ENCODE measurements at regions of chr13 and their contacts with region 1.

Region 1: GRCh38 chr13:27251166-27252091 is at the start of gene RPL21:
- DNase-seq: peak; percentile 89
- ATAC-seq: peak; percentile 93
- H3K4me3 Mint-ChIP-seq: peak within 1 kb of the TSS; percentile 93
- H3K27ac Mint-ChIP-seq: peak within 1 kb of the TSS; percentile 99
- H3K4me1 Mint-ChIP-seq: peaks cover 48% of the 10 kb centered on the region
- H3K27me3 Mint-ChIP-seq: no peaks in the 10 kb centered on the region
- CTCF ChIP-seq: no peak
- total RNA-seq, gene RPL21: 1,996 and 2,528 TPM in 2 replicates

Region 2: DNA sequence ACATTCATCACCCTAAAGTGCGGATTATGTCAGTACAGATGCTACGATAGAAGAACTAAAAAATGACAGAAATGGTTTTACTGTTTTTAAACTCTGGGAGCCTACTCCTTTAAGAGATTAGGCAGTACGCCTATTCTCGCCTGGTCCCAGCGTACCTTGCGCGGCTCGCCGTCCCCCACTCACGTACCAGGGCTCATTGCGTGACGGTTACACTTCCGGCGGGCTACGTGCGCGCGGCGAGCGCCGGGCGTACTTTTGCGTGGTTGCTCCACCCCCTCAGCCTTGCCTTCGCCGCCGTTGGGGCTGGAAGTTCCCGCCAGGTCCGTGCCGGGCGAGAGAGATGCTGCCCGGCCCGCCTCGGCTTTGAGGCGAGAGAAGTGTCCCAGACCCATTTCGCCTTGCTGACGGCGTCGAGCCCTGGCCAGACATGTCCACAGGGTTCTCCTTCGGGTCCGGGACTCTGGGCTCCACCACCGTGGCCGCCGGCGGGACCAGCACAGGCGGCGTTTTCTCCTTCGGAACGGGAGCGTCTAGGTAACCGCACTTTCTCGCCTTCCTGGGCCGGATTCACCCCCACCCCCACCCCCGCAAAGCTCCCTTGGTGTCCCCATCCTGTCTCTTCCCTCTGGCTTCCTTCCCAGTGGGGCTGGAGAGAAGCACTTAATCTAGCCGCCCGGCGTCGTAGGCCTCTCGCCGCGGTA is 1949.9 kb before region 1 on chr13 and contains the start of gene NUP58:
- CTCF ChIA-PET with region 1: no interaction called
- POLR2A ChIA-PET with region 1: no interaction called
- intact Hi-C with region 1: loop called (anchors 2 kb)
- DNase-seq: peak; percentile 89
- ATAC-seq: peak; percentile 99
- H3K4me3 Mint-ChIP-seq: peak within 1 kb of the TSS; percentile 91
- H3K27ac Mint-ChIP-seq: peak within 1 kb of the TSS; percentile 91
- H3K4me1 Mint-ChIP-seq: peaks cover 32% of the 10 kb centered on the region
- H3K27me3 Mint-ChIP-seq: peaks cover 19% of the 10 kb centered on the region
- CTCF ChIP-seq: no peak
- total RNA-seq, gene NUP58: 44.8 and 48.4 TPM in 2 replicates

Region 3: DNA sequence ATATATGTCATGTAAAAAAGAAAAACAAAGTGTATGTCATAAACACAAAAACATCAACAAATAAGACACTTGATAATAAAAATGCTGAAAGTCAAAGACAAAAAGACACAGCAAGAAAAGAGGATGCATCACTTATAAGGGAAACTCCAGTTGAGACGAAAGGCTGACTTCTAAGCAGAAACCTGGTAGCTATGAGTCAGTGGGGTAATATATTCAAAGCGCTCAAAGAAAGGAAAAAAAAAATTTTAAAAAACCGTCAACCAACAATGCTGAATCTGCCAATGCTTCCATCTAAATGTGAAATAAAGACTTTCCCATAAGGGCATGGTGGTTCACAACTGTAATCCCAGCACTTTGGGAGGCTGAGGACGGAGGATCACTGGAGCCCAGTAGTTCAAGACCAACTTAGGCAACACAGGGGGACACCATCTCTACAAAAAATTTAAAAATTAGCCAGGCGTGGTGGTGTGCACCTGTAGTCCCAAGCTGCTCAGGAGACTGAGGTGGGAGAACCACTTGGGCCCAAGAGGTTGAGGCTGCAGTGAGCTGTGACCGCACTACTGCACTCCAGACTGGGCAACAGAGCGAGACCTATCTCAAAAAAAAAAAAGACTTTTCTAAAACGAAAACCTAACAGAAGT is 103.8 kb before region 1 on chr13:
- CTCF ChIA-PET with region 1: no interaction called
- POLR2A ChIA-PET with region 1: interaction called, 12 read pairs
- intact Hi-C with region 1: loop called (anchors 1 kb)
- DNase-seq: peak; percentile 48
- ATAC-seq: peak; percentile 90
- H3K4me3 Mint-ChIP-seq: peak overlapping the region; percentile 81
- H3K27ac Mint-ChIP-seq: peak overlapping the region; percentile 99
- H3K4me1 Mint-ChIP-seq: peaks cover 92% of the 10 kb centered on the region
- H3K27me3 Mint-ChIP-seq: no peaks in the 10 kb centered on the region
- CTCF ChIP-seq: no peak

Region 4: DNA sequence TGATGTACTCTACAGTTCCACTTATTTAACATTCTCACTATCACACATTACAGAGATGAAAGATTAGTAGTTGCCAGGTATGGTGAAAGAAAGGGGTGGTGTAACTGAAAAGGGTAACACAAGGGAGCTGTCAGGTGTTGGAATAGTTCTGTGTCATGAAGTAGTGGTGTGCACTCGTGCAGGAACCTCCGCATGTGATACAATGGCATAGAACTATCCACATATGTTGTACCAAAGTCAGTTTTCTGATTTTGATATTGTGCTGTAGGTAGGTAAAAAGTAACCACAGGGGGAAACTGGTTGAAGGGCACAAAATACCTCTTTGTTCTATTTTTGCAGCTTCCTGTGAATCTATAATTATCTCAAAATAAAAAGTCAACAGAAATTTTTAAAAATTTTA is 24.4 kb before region 1 on chr13:
- CTCF ChIA-PET with region 1: no interaction called
- POLR2A ChIA-PET with region 1: interaction called, 5 read pairs
- intact Hi-C with region 1: loop called (anchors 2 kb)
- DNase-seq: no peak
- ATAC-seq: peak; percentile 35
- H3K4me3 Mint-ChIP-seq: peak overlapping the region; percentile 36
- H3K27ac Mint-ChIP-seq: peak overlapping the region; percentile 32
- H3K4me1 Mint-ChIP-seq: peaks cover 67% of the 10 kb centered on the region
- H3K27me3 Mint-ChIP-seq: no peaks in the 10 kb centered on the region
- CTCF ChIP-seq: no peak

Region 5: GRCh38 chr13:27302643-27303262 is 51.3 kb after region 1 on chr13:
- CTCF ChIA-PET with region 1: no interaction called
- POLR2A ChIA-PET with region 1: no interaction called
- intact Hi-C with region 1: no loop called
- DNase-seq: no peak
- ATAC-seq: no peak
- H3K4me3 Mint-ChIP-seq: no peak overlapping the region
- H3K27ac Mint-ChIP-seq: no peak overlapping the region
- H3K4me1 Mint-ChIP-seq: peaks cover 16% of the 10 kb centered on the region
- H3K27me3 Mint-ChIP-seq: no peaks in the 10 kb centered on the region
- CTCF ChIP-seq: no peak

Region 6: DNA sequence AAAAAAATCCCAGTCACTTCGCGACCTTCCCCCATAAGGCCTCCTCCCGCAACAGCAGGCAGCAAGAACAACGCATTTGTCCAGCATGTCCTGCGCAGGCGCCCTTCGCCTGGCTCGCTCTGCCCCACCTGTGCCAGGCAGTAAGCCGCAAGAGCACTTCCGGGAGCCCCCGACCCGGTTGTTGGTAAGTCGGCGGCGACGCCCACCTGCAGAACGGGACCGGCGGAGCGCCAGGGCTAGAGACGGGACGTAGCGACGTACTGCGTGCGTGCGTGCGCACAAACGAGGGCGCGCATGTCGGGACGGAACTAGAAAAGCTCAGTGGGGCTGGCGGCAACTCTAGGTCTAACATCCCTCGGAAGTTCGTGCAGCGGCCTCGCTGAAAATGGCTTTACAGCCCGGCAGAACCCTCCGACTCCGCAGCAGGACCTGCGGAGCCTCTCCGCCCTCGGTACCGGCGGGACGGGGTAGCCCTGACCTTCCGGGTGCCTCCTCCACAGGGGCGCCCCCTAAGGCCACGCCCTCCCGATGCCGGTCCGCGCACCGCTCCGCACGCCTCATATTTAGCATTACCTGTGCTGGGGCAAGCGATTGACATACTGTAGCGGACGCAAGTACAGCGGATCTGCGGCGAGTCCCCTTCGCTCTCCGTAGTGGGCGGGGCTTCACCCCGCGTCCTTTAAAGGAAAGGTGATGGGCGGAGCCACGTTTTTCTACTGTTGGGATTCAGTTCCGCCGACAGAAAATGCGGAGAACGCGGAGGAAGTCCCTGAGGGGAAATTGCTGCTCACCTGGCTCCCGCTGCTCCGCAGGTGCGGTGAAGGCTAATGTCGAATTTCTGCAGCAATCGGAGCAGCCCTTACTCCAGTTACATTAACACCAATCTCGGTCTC is 198.8 kb after region 1 on chr13 and contains the start of gene MTIF3:
- CTCF ChIA-PET with region 1: no interaction called
- POLR2A ChIA-PET with region 1: interaction called, 7 read pairs
- intact Hi-C with region 1: loop called (anchors 1 kb)
- DNase-seq: peak; percentile 89
- ATAC-seq: peak; percentile 81
- H3K4me3 Mint-ChIP-seq: peak within 1 kb of the TSS; percentile 96
- H3K27ac Mint-ChIP-seq: peak within 1 kb of the TSS; percentile 98
- H3K4me1 Mint-ChIP-seq: peaks cover 69% of the 10 kb centered on the region
- H3K27me3 Mint-ChIP-seq: no peaks in the 10 kb centered on the region
- CTCF ChIP-seq: no peak
- total RNA-seq, gene MTIF3: 39.8 and 50.1 TPM in 2 replicates

Region 7: DNA sequence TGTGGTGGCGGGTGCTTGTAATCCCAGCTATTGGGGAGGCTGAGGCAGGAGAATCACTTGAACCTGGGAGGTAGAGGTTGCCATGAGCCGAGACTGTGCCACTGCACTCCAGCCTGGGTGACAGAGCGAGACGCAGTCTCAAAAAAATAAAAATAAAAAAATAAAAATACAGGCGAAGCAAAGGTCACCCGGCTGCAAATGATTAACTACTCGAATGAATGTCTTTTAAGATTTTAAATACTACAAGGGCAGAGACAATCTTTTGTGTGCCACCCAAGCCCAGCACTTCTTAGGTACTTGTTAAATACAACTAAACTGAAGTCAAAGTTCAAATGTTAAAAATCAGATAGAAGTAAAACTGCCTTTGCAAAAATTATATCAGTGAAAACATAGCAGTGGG is 362.2 kb after region 1 on chr13:
- CTCF ChIA-PET with region 1: no interaction called
- POLR2A ChIA-PET with region 1: no interaction called
- intact Hi-C with region 1: no loop called
- DNase-seq: no peak
- ATAC-seq: no peak
- H3K4me3 Mint-ChIP-seq: no peak overlapping the region
- H3K27ac Mint-ChIP-seq: no peak overlapping the region
- H3K4me1 Mint-ChIP-seq: peaks cover 41% of the 10 kb centered on the region
- H3K27me3 Mint-ChIP-seq: no peaks in the 10 kb centered on the region
- CTCF ChIP-seq: no peak

Region 8: DNA sequence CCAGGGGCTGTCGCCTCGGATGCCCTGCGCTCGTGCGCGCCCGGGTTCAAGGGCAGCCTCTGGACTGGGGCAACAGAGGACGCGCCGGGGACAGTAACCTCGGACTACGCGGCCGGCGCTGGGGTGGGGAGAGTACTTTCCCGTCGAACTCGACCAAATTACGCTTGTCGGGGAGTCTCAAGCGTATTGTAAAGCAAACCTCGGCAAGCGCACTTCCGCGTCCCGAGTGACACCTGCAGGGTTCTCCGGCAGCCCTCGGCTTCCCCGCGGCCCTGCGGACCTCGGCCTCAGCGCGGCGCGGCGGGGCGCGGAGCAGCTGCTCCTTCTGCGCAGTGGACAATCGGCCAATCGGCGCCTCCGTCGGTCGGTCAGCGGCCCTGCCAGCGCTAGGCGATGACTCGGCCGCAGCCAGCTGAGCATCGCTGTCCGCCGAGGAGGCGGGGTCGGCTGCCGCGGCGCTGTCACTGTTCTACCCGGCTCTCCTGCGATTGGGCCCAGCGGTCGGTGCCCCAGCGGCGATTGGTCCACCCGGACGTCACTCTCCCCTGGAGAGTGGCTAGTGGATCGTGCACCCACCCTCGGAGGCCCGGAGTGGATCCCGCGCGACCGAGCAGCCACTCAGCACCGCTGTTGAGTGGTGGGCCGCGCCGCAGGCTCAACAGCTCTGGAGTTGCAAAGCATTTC is 1467.3 kb after region 1 on chr13 and contains the start of gene SLC46A3:
- CTCF ChIA-PET with region 1: no interaction called
- POLR2A ChIA-PET with region 1: no interaction called
- intact Hi-C with region 1: loop called (anchors 5 kb)
- DNase-seq: peak; percentile 95
- ATAC-seq: peak; percentile 98
- H3K4me3 Mint-ChIP-seq: peak within 1 kb of the TSS; percentile 92
- H3K27ac Mint-ChIP-seq: peak within 1 kb of the TSS; percentile 92
- H3K4me1 Mint-ChIP-seq: peaks cover 23% of the 10 kb centered on the region
- H3K27me3 Mint-ChIP-seq: no peaks in the 10 kb centered on the region
- CTCF ChIP-seq: no peak
- total RNA-seq, gene SLC46A3: 8.6 and 11.8 TPM in 2 replicates

Measured in activated B cell treated with CpG ODN at 0.5 μM for 24 hours (primary cell).